Caco-2 (cell line): ENCODE measurements at regions of chr15 and their contacts with region 1.

Region 1: DNA sequence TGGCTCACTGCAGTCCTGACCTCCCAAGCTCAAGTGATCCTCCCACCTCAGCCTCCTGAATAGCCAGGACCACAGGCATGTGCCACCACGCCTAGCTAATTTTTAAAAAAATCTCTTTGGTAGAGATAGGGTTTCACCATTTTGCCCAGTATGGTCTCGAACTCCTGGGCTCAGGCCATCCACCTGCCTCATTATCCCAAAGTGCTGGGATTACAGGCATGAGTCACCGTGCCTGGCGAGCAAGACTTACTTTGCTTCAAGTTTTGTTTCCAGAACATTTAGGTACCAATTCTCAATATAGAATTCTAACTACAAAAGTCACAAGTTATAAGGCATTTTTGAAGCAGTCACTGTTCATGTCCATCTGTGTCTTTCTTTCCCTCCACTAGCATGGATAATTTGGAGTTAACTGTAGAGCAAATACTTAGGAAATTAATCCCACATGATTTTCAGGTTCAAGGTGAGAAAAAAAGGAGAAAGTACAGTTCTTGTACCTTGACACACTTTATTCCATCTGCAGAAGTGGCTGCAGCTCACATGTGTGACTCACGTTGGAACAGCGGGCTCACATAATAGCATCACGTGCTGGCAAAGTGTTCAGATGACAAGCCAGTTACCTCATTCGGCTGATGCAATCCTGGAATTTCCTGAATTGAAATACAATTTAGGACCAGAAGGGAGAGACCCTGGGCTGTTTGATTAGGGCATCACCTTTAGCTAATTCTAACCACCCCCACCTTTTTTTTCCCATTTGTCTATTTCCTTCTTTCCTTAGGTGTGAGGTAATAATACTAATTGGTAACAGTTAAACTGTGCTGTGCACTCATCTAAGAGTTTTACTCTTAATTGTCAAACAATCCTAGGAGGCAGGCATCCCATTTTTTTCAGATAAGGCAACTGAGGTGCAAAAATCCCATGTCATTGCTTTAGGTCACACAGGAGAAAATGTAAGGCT is 46.9 kb upstream of the NEDD4 start:
- DNase-seq: peak; percentile 85 to 88
- H3K4me3 ChIP-seq: no peak overlapping the region
- H3K4me3 Mint-ChIP-seq: peak overlapping the region; percentile 33
- H3K27ac Mint-ChIP-seq: peak overlapping the region; percentile 91
- H3K4me1 ChIP-seq: peaks cover 90% of the 10 kb centered on the region
- H3K4me1 Mint-ChIP-seq: peaks cover 63% of the 10 kb centered on the region
- H3K27me3 ChIP-seq: no peaks in the 10 kb centered on the region
- H3K27me3 Mint-ChIP-seq: no peaks in the 10 kb centered on the region
- CTCF ChIP-seq: no peak

Region 2: GRCh38 chr15:55954862-55955605 is 85.3 kb before region 1 on chr15:
- CTCF ChIA-PET with region 1: no interaction called
- POLR2A ChIA-PET with region 1: no interaction called
- intact Hi-C with region 1: loop called (anchors 1 kb)
- DNase-seq: no peak
- H3K4me3 ChIP-seq: no peak overlapping the region
- H3K4me3 Mint-ChIP-seq: no peak overlapping the region
- H3K27ac Mint-ChIP-seq: no peak overlapping the region
- H3K4me1 ChIP-seq: peaks cover 38% of the 10 kb centered on the region
- H3K4me1 Mint-ChIP-seq: peaks cover 28% of the 10 kb centered on the region
- H3K27me3 ChIP-seq: no peaks in the 10 kb centered on the region
- H3K27me3 Mint-ChIP-seq: no peaks in the 10 kb centered on the region
- CTCF ChIP-seq: no peak

Region 3: GRCh38 chr15:56168394-56168793 is 128.0 kb after region 1 on chr15:
- CTCF ChIA-PET with region 1: no interaction called
- POLR2A ChIA-PET with region 1: no interaction called
- intact Hi-C with region 1: no loop called
- DNase-seq: no peak
- H3K4me3 ChIP-seq: no peak overlapping the region
- H3K4me3 Mint-ChIP-seq: no peak overlapping the region
- H3K27ac Mint-ChIP-seq: no peak overlapping the region
- H3K4me1 ChIP-seq: no peaks in the 10 kb centered on the region
- H3K4me1 Mint-ChIP-seq: no peaks in the 10 kb centered on the region
- H3K27me3 ChIP-seq: no peaks in the 10 kb centered on the region
- H3K27me3 Mint-ChIP-seq: no peaks in the 10 kb centered on the region
- CTCF ChIP-seq: no peak